Dendritic cell treated with granulocyte-macrophage colony-stimulating factor and Interleukin-4, amounts not matched to agents 40 ng/mL and 50 ng/mL, for 4 days (primary cell): ENCODE measurements at regions of chr5 and their contacts with region 1.

Region 1: GRCh38 chr5:66757188-66757833 is 161.1 kb downstream of the MAST4 start:
- H3K4me3 Mint-ChIP-seq: no peak overlapping the region
- H3K27ac Mint-ChIP-seq: no peak overlapping the region
- H3K4me1 Mint-ChIP-seq: peaks cover 6% of the 10 kb centered on the region
- H3K27me3 Mint-ChIP-seq: peaks cover 21% of the 10 kb centered on the region

Region 2: GRCh38 chr5:66171349-66172344 is 585.7 kb before region 1 on chr5:
- intact Hi-C with region 1: loop called (anchors 5 kb)
- H3K4me3 Mint-ChIP-seq: no peak overlapping the region
- H3K27ac Mint-ChIP-seq: no peak overlapping the region
- H3K4me1 Mint-ChIP-seq: no peaks in the 10 kb centered on the region
- H3K27me3 Mint-ChIP-seq: no peaks in the 10 kb centered on the region

Region 3: DNA sequence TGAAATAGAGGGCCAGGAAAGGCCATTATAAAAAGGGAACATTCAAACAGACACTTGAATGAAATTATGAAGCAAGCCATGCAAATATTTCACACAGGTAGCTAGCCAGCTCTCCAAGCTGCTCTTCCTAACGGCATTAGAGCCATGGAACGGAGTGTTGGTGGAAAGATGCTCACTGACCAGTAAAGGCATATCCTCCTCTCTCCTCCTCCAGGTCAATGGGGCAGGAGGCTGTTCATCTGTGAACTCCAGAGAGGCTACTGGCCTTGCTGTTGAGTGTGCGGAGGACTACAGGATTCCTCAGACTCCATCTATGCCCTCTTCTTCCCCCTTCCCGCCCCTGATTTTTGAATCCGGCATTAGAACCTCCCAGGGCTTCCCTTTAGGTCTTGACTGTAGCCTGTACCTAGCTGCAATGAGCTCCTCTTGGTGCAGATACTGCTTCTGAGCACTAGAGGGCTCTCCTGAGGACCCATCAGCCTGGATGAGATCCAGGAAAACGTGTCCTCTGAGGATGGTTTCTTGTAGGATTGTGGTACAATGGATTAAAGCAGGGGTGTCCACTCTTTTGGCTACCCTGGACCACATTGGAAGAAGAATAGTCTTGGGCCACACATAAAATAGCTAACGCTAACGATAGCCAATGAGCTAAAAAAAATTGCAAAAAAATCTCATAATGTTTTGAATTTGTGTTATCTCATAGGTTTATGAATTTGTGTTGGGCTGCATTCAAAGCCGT is 451.0 kb before region 1 on chr5:
- intact Hi-C with region 1: loop called (anchors 1 kb)
- H3K4me3 Mint-ChIP-seq: no peak overlapping the region
- H3K27ac Mint-ChIP-seq: no peak overlapping the region
- H3K4me1 Mint-ChIP-seq: no peaks in the 10 kb centered on the region
- H3K27me3 Mint-ChIP-seq: peaks cover 14% of the 10 kb centered on the region